GM10248 (cell line): ENCODE measurements at regions of chr6 and their contacts with region 1.

Region 1: GRCh38 chr6:52213127-52213526 is 27.0 kb downstream of the IL17A start:
- DNase-seq: no peak
- CTCF ChIP-seq: peak; percentile 10

Region 2: DNA sequence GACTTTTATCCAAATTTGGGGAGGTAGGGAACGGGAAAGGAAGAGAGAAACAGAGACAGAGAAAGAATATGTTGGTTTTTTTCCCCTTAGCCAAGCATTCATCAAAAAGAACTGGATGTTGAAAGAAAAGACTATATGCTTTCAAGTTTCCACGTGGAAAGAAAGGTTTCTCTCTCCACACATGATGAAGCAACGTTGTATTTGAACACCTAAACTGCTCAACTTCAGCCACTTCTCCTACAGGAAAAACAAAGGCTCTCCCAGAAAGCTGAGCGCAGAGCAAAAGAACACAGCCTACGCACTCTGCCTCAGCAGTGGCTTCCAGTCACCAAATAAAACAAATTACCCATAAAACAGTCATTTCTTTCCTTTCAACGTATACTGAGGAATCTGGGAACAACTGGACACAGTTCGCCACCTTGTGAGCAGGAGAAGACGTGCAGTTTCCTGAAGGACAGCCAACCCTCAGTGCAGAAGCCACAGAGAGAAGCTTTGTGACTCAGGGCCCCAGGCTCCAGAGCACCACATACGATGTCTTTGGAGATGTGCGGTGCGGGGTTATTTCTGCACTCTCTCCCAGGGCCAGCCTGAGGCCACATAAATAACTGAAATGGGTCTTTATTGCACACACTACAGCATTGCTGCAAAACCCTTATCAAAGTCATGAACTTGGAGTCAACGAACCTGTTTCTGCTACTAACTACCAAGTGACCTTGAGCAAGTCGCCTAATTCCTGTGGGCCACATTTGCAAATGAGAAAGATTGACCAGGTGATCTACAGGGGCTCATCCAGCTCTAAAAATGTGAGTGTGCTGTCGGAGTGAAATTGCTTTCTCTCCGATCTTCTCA is 21.1 kb after region 1 on chr6:
- CTCF ChIA-PET with region 1: interaction called, 11 read pairs
- POLR2A ChIA-PET with region 1: no interaction called
- DNase-seq: peak; percentile 52
- CTCF ChIP-seq: peak; percentile 66

Region 3: GRCh38 chr6:52317841-52318581 is 104.9 kb after region 1 on chr6:
- CTCF ChIA-PET with region 1: no interaction called
- POLR2A ChIA-PET with region 1: no interaction called
- DNase-seq: peak; percentile 78
- CTCF ChIP-seq: no peak